Sigmoid colon (tissue), 7 donors: ENCODE measurements at regions of chr3 and their contacts with region 1.

Region 1: GRCh38 chr3:3126477-3127431 is at the start of gene TRNT1:
- DNase-seq: peak; percentile 97
- H3K4me3 ChIP-seq: peak within 1 kb of the TSS; percentile 82 to 96 (median 93)
- H3K27ac ChIP-seq: peak within 1 kb of the TSS; percentile 87 to 94 (median 92)
- H3K4me1 ChIP-seq: peaks cover 0 to 21% (median 14%) of the 10 kb centered on the region in 4 donors
- H3K27me3 ChIP-seq: no peaks in the 10 kb centered on the region
- CTCF ChIP-seq: no peak
- EP300 ChIP-seq: no peak
- POLR2A ChIP-seq: peak; percentile 71 to 82
- total RNA-seq, gene TRNT1: 14.9 to 17.7 (median 15.7) TPM

Region 2: GRCh38 chr3:2274526-2274925 is 852.2 kb before region 1 on chr3:
- intact Hi-C with region 1: no loop called
- DNase-seq: no peak
- H3K4me3 ChIP-seq: no peak overlapping the region
- H3K27ac ChIP-seq: no peak overlapping the region
- H3K4me1 ChIP-seq: no peaks in the 10 kb centered on the region
- H3K27me3 ChIP-seq: no peaks in the 10 kb centered on the region
- CTCF ChIP-seq: no peak
- EP300 ChIP-seq: no peak
- POLR2A ChIP-seq: no peak

Region 3: GRCh38 chr3:2889736-2890135 is 237.0 kb before region 1 on chr3:
- intact Hi-C with region 1: no loop called
- DNase-seq: no peak
- H3K4me3 ChIP-seq: no peak overlapping the region
- H3K27ac ChIP-seq: no peak overlapping the region
- H3K4me1 ChIP-seq: no peaks in the 10 kb centered on the region
- H3K27me3 ChIP-seq: no peaks in the 10 kb centered on the region
- CTCF ChIP-seq: no peak
- EP300 ChIP-seq: no peak
- POLR2A ChIP-seq: no peak

Region 4: DNA sequence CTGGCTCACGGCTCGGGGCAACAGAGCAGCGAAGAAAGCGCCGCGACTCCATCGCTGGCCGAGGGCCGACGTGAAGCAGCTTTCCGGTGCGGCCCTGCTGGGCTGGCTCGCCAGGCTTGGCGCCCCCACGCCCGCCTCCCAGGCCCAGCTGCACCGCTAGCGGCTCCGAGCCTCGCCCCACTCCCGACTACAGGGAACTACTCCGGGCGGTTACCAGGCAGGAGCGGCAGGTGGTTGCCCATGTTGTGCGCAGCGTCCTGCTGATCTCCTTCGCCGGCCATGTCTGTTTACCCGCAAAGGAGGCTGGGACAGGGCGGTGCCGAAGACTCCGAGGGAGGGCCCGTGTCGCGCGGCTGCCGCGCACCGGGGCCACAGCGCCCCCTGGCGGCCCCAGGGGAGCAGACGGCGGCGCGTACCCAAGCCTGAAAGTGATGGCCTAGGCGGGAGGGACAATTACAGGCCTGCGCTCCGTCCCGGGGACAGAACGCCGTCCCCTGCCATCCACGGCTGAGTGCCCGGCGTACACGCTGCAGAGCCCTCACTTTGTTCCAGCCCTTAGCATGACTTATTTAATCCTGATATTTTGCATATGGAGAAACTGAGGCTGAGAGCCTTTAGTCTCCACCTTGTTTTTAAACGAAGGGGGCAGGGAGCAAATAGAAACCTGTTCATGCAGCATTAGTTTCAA is 52.8 kb after region 1 on chr3 and contains the start of gene CRBN:
- intact Hi-C with region 1: loop called (anchors 2 kb)
- DNase-seq: peak; percentile 88
- H3K4me3 ChIP-seq: peak within 1 kb of the TSS; percentile 73 to 97 (median 86)
- H3K27ac ChIP-seq: peak within 1 kb of the TSS; percentile 72 to 81 (median 80)
- H3K4me1 ChIP-seq: peaks cover 0 to 22% (median 21%) of the 10 kb centered on the region in 4 donors
- H3K27me3 ChIP-seq: no peaks in the 10 kb centered on the region
- CTCF ChIP-seq: peak; percentile 83 to 98 (median 88)
- EP300 ChIP-seq: peak in 1 of 4 donors; percentile 27
- POLR2A ChIP-seq: peak in 1 of 2 donors; percentile 32
- total RNA-seq, gene CRBN: 61.9 to 271 (median 157) TPM

Region 5: GRCh38 chr3:4303187-4304123 is 1176.7 kb after region 1 on chr3 and contains the start of gene SETMAR:
- intact Hi-C with region 1: loop called (anchors 5 kb)
- DNase-seq: peak; percentile 97
- H3K4me3 ChIP-seq: peak within 1 kb of the TSS; percentile 49 to 80 (median 70)
- H3K27ac ChIP-seq: peak within 1 kb of the TSS; percentile 90 to 96 (median 92)
- H3K4me1 ChIP-seq: peaks cover 0 to 50% (median 41%) of the 10 kb centered on the region in 4 donors
- H3K27me3 ChIP-seq: no peaks in the 10 kb centered on the region
- CTCF ChIP-seq: no peak
- EP300 ChIP-seq: no peak
- POLR2A ChIP-seq: peak; percentile 69 to 75
- total RNA-seq, gene SETMAR: 15.3 to 36.4 (median 28.6) TPM